ENCODE measurements at regions of chr17 and their contacts with region 1.

Region 1: GRCh38 chr17:29533976-29534375 is 32.9 kb downstream of the ABHD15 start:
- DNase-seq: no peak
- H3K4me3 ChIP-seq: no peak overlapping the region
- H3K27me3 ChIP-seq: no peaks in the 10 kb centered on the region
- CTCF ChIP-seq: no peak

Region 2: GRCh38 chr17:29504711-29505110 is 29.3 kb before region 1 on chr17:
- CTCF ChIA-PET with region 1: interaction called, 3 read pairs
- POLR2A ChIA-PET with region 1: interaction called, 11 read pairs
- DNase-seq: no peak
- H3K4me3 ChIP-seq: no peak overlapping the region
- H3K27me3 ChIP-seq: no peaks in the 10 kb centered on the region
- CTCF ChIP-seq: no peak

Region 3: GRCh38 chr17:29514792-29515191 is 19.2 kb before region 1 on chr17:
- CTCF ChIA-PET with region 1: interaction called, 7 read pairs
- POLR2A ChIA-PET with region 1: interaction called, 10 read pairs
- DNase-seq: no peak
- H3K4me3 ChIP-seq: no peak overlapping the region
- H3K27me3 ChIP-seq: no peaks in the 10 kb centered on the region
- CTCF ChIP-seq: no peak

Measured in BJ (cell line).